Sigmoid colon (tissue), 7 donors: ENCODE measurements at regions of chr16 and their contacts with region 1.

Region 1: DNA sequence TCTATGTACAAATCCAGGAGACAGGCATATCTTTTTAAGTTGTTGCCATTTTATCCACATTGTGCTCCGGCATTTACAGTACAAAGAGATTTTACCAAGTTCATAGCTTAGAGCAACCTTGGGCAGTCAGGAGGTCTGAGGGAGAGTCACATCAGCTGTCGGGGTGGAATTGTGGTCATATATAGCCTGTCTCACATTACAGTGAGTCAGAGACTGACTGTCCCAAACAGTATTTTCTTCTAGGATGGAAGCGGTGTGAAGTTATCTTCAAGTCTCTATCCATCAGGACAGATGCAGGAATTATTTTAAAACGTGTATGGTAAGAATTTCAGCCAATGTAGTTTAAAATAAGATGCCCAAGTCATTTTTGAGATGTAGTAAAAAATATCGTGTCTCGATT is 53.0 kb downstream of the GPRC5B start:
- DNase-seq: no peak
- H3K4me3 ChIP-seq: no peak overlapping the region
- H3K27ac ChIP-seq: no peak overlapping the region
- H3K4me1 ChIP-seq: peaks cover 0 to 6% (median 0%) of the 10 kb centered on the region in 4 donors
- H3K27me3 ChIP-seq: no peaks in the 10 kb centered on the region
- CTCF ChIP-seq: no peak
- EP300 ChIP-seq: no peak
- POLR2A ChIP-seq: no peak

Region 2: GRCh38 chr16:19898924-19899604 is 67.4 kb after region 1 on chr16:
- intact Hi-C with region 1: loop called (anchors 10 kb)
- DNase-seq: no peak
- H3K4me3 ChIP-seq: no peak overlapping the region
- H3K27ac ChIP-seq: no peak overlapping the region
- H3K4me1 ChIP-seq: no peaks in the 10 kb centered on the region
- H3K27me3 ChIP-seq: peaks cover 0 to 6% (median 0%) of the 10 kb centered on the region in 3 donors
- CTCF ChIP-seq: peak in 3 of 4 experiments; percentile 54 to 67 (median 56)
- EP300 ChIP-seq: no peak
- POLR2A ChIP-seq: no peak